ENCODE measurements at regions of chr15 and their contacts with region 1.

Region 1: GRCh38 chr15:40301467-40302179 is 6.1 kb downstream of the PLCB2 start:
- DNase-seq: peak in 1 of 2 experiments; percentile 75
- H3K4me3 ChIP-seq: no peak overlapping the region
- H3K27ac ChIP-seq: no peak overlapping the region
- H3K4me1 ChIP-seq: peaks cover 0 to 23% (median 10%) of the 10 kb centered on the region in 4 experiments; a peak in 6 of 7 replicates
- H3K27me3 ChIP-seq: peaks cover 0 to 2% (median 0%) of the 10 kb centered on the region in 4 experiments; a peak in 1 of 7 replicates
- CTCF ChIP-seq: no peak
- EP300 ChIP-seq: no peak
- POLR2A ChIP-seq: no peak
- RAD21 ChIP-seq: no peak

Region 2: GRCh38 chr15:40290918-40291574 is 10.6 kb before region 1 on chr15:
- CTCF ChIA-PET with region 1: interaction called, 518 read pairs
- POLR2A ChIA-PET with region 1: interaction called, 46 read pairs
- DNase-seq: peak in 1 of 2 experiments; percentile 80
- H3K4me3 ChIP-seq: peak overlapping the region; percentile 12 to 54 (median 18); a peak in 5 of 8 replicates
- H3K27ac ChIP-seq: no peak overlapping the region
- H3K4me1 ChIP-seq: peaks cover 0 to 28% (median 14%) of the 10 kb centered on the region in 4 experiments; a peak in 6 of 7 replicates
- H3K27me3 ChIP-seq: peaks cover 16 to 52% (median 36%) of the 10 kb centered on the region in 4 experiments; a peak in 6 of 7 replicates
- CTCF ChIP-seq: no peak
- EP300 ChIP-seq: no peak
- POLR2A ChIP-seq: no peak
- RAD21 ChIP-seq: no peak

Region 3: DNA sequence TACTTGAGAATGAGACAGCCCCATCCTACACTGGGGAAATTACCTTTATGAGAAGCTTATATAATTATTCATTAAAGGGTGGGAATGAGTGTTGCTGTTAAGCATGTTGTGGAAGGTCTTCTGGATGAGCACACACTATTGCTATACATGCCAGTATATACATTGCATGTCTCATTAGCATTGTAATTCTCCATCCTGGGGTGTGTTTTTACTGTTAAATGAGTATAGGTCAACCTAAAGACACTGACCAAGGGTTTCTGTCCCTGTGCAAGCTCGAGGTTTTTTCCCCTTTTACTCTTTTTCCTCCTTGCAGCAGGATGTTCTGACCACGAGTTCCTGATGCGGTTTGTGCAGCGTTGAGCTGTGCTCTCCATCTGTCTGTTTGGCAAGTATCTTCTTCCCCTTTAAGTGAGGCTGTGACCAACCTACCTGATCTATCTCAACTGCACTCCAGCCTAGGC is 96.8 kb after region 1 on chr15:
- CTCF ChIA-PET with region 1: no interaction called
- POLR2A ChIA-PET with region 1: no interaction called
- DNase-seq: no peak
- H3K4me3 ChIP-seq: no peak overlapping the region
- H3K27ac ChIP-seq: no peak overlapping the region
- H3K4me1 ChIP-seq: no peaks in the 10 kb centered on the region
- H3K27me3 ChIP-seq: no peaks in the 10 kb centered on the region
- CTCF ChIP-seq: no peak
- EP300 ChIP-seq: no peak
- POLR2A ChIP-seq: no peak
- RAD21 ChIP-seq: no peak

Region 4: GRCh38 chr15:40456299-40456712 is 154.7 kb after region 1 on chr15:
- CTCF ChIA-PET with region 1: no interaction called
- POLR2A ChIA-PET with region 1: no interaction called
- DNase-seq: no peak
- H3K4me3 ChIP-seq: no peak overlapping the region
- H3K27ac ChIP-seq: no peak overlapping the region
- H3K4me1 ChIP-seq: peaks cover 4 to 33% (median 17%) of the 10 kb centered on the region in 4 experiments
- H3K27me3 ChIP-seq: no peaks in the 10 kb centered on the region
- CTCF ChIP-seq: no peak
- EP300 ChIP-seq: no peak
- POLR2A ChIP-seq: no peak
- RAD21 ChIP-seq: no peak

Region 5: DNA sequence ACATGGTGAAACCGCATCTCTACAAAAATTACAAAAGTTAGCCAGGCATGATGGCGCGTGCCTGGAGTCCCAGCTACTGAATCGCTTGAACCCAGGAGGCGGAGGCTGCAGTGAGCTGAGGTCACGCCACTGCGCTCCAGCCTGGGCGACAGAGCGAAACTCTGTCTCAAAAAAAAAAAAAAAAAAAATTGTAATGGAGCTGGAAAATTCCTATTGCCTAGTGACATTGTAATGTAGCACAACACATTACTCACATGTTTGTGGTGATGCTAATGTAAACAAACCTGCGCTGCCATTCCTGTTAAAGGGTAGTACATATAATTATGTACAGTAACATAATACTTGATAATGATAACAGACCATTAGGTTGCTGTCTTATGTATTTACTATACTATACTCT is 331.5 kb after region 1 on chr15:
- CTCF ChIA-PET with region 1: no interaction called
- POLR2A ChIA-PET with region 1: no interaction called
- DNase-seq: no peak
- H3K4me3 ChIP-seq: no peak overlapping the region
- H3K27ac ChIP-seq: no peak overlapping the region
- H3K4me1 ChIP-seq: no peaks in the 10 kb centered on the region
- H3K27me3 ChIP-seq: no peaks in the 10 kb centered on the region
- CTCF ChIP-seq: no peak
- EP300 ChIP-seq: no peak
- POLR2A ChIP-seq: no peak
- RAD21 ChIP-seq: no peak

Region 6: DNA sequence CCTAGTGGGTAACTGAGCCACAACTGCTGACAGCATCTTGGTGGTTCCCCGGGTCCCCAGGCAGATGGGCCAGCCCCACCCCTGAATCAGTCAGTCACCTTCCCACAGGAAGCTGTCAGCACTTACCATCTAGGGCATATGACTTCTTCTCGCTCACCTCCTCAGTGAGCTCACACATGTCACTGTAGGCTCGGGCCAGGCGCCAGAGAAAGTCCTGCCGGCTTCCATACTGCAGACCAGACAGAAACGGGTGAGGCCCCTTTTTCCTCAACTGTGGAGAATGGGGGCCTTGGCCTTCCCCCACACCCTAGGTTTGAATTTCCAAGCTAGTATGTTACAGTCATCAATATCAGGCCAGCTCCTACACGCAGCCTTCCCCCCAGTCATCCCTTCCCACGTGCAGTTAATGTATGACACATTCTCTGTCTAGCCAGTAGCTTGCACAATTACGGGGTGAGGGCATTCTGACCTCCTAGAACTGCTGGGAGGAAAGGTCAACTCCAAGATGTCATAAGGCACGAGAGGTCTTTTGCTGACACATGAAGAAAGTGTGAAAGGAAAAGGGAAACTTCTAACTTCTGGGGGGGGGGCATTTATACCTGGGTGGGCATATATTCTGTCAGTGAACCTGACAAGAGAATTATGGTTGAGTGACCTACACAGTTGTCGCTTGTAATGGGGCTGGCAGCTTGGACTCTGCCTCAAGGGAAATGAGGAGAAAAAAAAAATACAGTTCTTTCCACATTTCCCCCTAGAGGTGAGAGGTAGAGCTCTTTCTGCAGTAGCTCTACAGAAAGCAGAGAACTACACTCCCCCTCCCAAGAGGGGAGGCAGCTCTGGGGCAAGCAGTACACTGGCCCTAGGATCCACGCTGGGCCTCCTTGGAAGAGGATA is 442.5 kb after region 1 on chr15:
- CTCF ChIA-PET with region 1: no interaction called
- POLR2A ChIA-PET with region 1: no interaction called
- DNase-seq: no peak
- H3K4me3 ChIP-seq: no peak overlapping the region
- H3K27ac ChIP-seq: no peak overlapping the region
- H3K4me1 ChIP-seq: peaks cover 9 to 16% (median 10%) of the 10 kb centered on the region in 4 experiments
- H3K27me3 ChIP-seq: no peaks in the 10 kb centered on the region
- CTCF ChIP-seq: peak in 2 of 3 experiments; percentile 10 to 15; a peak in 2 of 4 replicates
- EP300 ChIP-seq: no peak
- POLR2A ChIP-seq: no peak
- RAD21 ChIP-seq: peak in 1 of 2 experiments; percentile 9; a peak in 1 of 4 replicates